Activated CD8-positive, alpha-beta memory T cell treated with anti-CD3 and anti-CD28 coated beads, Interleukin-2, amount 10 ng/mL, durations not matched to agents 7 days and 5 days (primary cell): ENCODE measurements at regions of chr19 and their contacts with region 1.

Region 1: GRCh38 chr19:10580979-10581631 is 6.0 kb downstream of the AP1M2 start:
- DNase-seq: peak; percentile 94
- ATAC-seq: peak; percentile 96
- H3K4me3 Mint-ChIP-seq: no peak overlapping the region
- H3K27ac Mint-ChIP-seq: no peak overlapping the region
- H3K4me1 Mint-ChIP-seq: peaks cover 20% of the 10 kb centered on the region
- H3K27me3 Mint-ChIP-seq: no peaks in the 10 kb centered on the region

Region 2: DNA sequence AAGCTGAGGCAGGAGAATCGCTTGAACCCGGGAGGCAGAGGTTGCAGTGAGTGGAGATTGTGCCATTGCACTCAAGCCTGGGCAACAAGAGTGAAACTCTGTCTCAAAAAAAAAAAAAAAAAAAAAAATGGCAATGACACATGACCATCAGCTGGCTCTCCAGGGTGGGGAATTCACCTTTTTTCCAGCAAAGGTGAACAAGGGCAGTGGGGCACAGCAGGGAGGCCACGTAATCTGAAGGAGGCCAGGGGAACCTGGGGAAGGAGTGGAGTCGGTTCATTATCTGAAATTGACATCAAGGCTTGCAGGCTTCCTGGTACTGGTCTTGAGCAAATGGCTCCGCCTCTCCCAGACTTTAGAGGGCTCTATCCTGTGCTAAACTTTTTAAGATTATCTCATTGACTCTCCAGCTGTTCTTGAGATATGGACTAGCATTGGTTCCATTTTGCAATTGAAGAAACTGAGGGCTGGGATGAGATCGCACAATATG is 106.1 kb before region 1 on chr19:
- CTCF ChIA-PET with region 1: no interaction called
- DNase-seq: no peak
- ATAC-seq: no peak
- H3K4me3 Mint-ChIP-seq: no peak overlapping the region
- H3K27ac Mint-ChIP-seq: no peak overlapping the region
- H3K4me1 Mint-ChIP-seq: peaks cover 14% of the 10 kb centered on the region
- H3K27me3 Mint-ChIP-seq: no peaks in the 10 kb centered on the region

Region 3: GRCh38 chr19:10551698-10552301 is 29.3 kb before region 1 on chr19:
- CTCF ChIA-PET with region 1: interaction called, 17 read pairs
- DNase-seq: peak; percentile 71
- ATAC-seq: no peak
- H3K4me3 Mint-ChIP-seq: no peak overlapping the region
- H3K27ac Mint-ChIP-seq: peak overlapping the region; percentile 95
- H3K4me1 Mint-ChIP-seq: peaks cover 56% of the 10 kb centered on the region
- H3K27me3 Mint-ChIP-seq: no peaks in the 10 kb centered on the region

Region 4: DNA sequence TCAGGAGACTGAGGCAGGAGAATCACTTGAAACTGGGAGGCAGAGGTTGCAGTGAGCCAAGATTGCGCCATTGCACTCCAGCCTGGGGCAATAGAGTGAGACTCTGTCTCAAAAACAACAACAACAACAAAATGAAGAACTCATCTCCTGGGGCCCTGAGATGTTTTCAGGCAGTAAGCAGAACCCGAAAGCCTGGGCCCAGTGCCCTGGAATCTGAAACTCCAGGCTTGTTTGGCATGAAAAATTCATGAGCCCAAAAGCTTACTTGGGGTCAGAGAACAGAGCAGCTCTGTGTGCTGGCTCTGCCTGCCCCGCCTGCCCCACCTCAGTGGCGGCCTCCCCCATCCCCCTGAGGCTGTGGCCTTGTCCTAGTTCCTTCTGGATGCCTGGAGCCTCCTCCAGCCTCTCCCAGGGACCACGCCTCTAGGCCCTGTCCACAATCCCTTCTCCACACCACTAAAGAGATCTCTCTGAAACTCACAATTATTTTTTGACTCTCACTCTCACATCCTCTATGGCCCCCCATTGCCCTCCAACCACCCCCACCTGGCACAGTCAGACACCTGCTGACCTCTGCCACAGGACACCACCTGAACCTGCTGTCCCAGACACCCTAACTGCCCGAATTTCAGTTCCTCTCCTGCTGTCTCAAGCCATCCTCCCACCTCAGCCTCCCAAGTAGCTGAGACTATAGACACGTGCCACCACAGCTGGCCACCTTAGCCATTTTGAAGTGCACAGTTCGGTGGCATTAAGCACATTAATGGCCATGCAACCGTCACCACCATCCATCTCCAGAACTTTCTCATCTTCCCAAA is 12.9 kb after region 1 on chr19:
- CTCF ChIA-PET with region 1: interaction called, 32 read pairs
- DNase-seq: no peak
- ATAC-seq: no peak
- H3K4me3 Mint-ChIP-seq: no peak overlapping the region
- H3K27ac Mint-ChIP-seq: no peak overlapping the region
- H3K4me1 Mint-ChIP-seq: peaks cover 28% of the 10 kb centered on the region
- H3K27me3 Mint-ChIP-seq: no peaks in the 10 kb centered on the region

Region 5: DNA sequence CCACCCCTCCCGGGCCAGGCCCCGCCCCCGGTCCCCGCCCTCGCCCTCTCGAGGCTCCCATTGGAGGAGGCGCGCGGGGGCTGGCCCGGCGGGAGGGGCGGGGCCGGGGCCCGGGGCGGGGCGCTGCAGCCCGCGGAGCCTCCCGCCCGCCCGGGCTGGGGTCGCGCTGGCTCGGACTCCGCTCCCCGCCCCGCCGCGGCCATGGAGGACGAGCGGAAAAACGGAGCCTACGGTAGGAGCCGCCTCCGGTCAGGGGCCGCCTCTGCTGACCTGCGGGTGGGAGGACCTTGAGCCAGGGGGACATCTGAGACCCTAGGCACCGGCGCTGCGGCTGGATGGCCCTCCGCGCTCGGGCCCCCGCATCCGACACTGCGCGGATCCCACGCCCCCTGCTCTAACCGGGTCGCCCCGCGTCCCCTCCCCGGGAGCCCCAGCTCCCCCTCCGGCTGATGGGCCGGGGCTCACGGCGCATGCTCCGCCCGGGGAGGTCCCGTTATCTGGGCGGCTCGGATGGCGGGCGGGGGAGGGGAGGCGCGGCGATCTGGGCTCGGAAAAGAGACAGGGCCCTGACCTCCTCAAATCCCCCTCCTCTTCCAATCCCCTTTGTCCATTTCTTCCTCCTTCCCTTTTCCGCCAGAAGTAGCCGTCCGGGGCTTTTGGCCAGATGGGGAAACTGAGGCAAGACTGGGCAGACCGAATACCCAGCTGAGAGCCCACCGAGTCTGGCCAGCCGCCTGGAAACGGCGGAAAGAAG is 21.4 kb after region 1 on chr19:
- CTCF ChIA-PET with region 1: interaction called, 41 read pairs
- DNase-seq: peak; percentile 92
- ATAC-seq: peak; percentile 90
- H3K4me3 Mint-ChIP-seq: peak overlapping the region; percentile 90
- H3K27ac Mint-ChIP-seq: peak overlapping the region; percentile 99
- H3K4me1 Mint-ChIP-seq: peaks cover 23% of the 10 kb centered on the region
- H3K27me3 Mint-ChIP-seq: peaks cover 2% of the 10 kb centered on the region

Region 6: GRCh38 chr19:10620786-10621185 is 39.7 kb after region 1 on chr19:
- CTCF ChIA-PET with region 1: interaction called, 20 read pairs
- DNase-seq: no peak
- ATAC-seq: no peak
- H3K4me3 Mint-ChIP-seq: no peak overlapping the region
- H3K27ac Mint-ChIP-seq: no peak overlapping the region
- H3K4me1 Mint-ChIP-seq: peaks cover 24% of the 10 kb centered on the region
- H3K27me3 Mint-ChIP-seq: no peaks in the 10 kb centered on the region

Region 7: GRCh38 chr19:10644260-10645007 is 63.3 kb after region 1 on chr19:
- CTCF ChIA-PET with region 1: interaction called, 281 read pairs
- DNase-seq: peak; percentile 89
- ATAC-seq: peak; percentile 97
- H3K4me3 Mint-ChIP-seq: no peak overlapping the region
- H3K27ac Mint-ChIP-seq: no peak overlapping the region
- H3K4me1 Mint-ChIP-seq: peaks cover 4% of the 10 kb centered on the region
- H3K27me3 Mint-ChIP-seq: no peaks in the 10 kb centered on the region

Region 8: DNA sequence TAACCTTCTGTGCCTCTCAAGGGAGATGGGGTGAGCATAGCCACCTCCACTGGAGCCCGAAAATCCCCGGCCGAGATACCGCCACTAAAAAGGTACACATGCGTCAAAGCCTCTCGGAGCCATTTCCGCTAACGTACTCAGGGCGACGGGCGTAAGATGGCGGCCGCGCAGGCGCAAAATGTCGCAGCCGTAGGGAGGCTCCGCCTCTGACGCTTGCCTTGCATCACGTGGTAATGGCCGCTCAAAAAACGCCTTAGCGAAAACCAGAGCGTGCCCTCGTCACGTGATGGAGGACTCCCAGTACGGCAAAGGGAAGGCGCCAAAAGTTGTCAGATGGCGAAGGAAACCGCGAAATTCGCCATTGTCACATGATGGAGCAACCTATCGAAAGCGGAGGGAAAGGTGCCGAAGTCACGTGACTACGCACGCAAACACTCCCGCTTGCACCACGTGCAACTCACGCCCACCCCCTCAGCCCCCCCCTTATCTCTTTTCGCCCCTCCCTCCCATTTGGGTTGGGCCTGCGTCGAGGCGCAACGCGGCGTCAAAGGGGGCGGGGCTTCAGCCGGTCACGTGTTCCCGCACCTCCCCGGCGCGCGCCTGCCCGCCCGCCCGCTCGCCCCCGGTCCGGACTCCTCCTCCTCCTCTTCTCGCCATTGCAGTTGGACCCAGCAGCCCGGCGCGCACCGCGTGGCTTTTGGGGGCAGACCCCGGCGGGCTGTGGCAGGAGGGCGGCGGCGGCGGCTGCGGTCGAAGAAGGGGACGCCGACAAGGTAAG is 72.8 kb after region 1 on chr19 and contains the start of gene ILF3:
- CTCF ChIA-PET with region 1: interaction called, 21 read pairs
- DNase-seq: peak; percentile 100
- ATAC-seq: peak; percentile 80
- H3K4me3 Mint-ChIP-seq: peak within 1 kb of the TSS; percentile 84
- H3K27ac Mint-ChIP-seq: peak within 1 kb of the TSS; percentile 97
- H3K4me1 Mint-ChIP-seq: peaks cover 35% of the 10 kb centered on the region
- H3K27me3 Mint-ChIP-seq: no peaks in the 10 kb centered on the region
- total RNA-seq, gene ILF3: 418 to 431 TPM